ENCODE measurements at regions of chr18 and their contacts with region 1.

Region 1: DNA sequence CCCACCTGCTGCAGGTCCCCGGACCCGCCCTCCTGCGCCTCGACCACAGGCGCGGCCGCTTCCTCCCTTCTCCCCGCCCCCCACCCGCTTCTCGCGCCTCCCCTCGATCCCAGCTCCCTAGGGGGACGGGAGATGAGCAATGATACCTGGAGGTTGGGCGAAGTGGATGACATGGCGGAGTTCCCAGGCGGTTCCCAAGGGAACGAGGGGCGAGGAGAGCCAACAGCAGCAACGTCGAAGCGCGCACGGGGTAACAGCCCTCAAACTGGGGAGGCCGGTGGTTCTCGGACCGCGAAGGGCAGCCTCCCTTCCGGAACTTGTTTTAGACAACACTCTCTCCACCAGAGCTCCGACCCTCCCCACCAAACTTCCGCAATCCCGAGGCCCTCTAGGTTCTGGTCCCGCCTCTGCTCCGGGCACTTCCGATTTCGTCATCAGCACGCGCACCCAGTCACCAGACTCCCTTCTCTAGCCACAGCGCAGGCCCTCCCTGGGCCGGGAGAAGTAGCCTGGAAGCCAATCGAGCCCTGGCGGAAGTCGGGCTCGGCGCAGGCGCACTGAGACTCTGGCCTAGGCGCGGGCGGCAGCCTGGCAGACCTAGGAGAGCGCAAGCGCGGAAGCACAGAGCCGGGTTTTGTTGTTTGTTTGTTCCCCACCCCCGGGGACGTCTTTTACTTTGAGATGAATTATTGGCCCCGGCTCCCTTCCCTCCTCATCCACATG is at the start of gene VPS4B:
- DNase-seq: peak; percentile 99
- H3K4me3 ChIP-seq: peak within 1 kb of the TSS; percentile 92
- H3K27ac ChIP-seq: peak within 1 kb of the TSS; percentile 97
- H3K27me3 ChIP-seq: no peaks in the 10 kb centered on the region
- CTCF ChIP-seq: no peak
- polyA plus RNA-seq, gene VPS4B: 26.4 and 34.3 TPM in 2 replicates

Region 2: GRCh38 chr18:63367053-63367953 is 54.9 kb before region 1 on chr18 and contains the start of gene KDSR:
- CTCF ChIA-PET with region 1: no interaction called
- POLR2A ChIA-PET with region 1: interaction called, 11 read pairs
- DNase-seq: peak; percentile 97
- H3K4me3 ChIP-seq: peak within 1 kb of the TSS; percentile 90
- H3K27ac ChIP-seq: peak within 1 kb of the TSS; percentile 96
- H3K27me3 ChIP-seq: no peaks in the 10 kb centered on the region
- CTCF ChIP-seq: no peak
- polyA plus RNA-seq, gene KDSR: 34.0 and 39.9 TPM in 2 replicates

Region 3: GRCh38 chr18:63410792-63411191 is 11.5 kb before region 1 on chr18:
- CTCF ChIA-PET with region 1: no interaction called
- POLR2A ChIA-PET with region 1: interaction called, 10 read pairs
- DNase-seq: peak; percentile 36
- H3K4me3 ChIP-seq: no peak overlapping the region
- H3K27ac ChIP-seq: peak overlapping the region; percentile 33
- H3K27me3 ChIP-seq: no peaks in the 10 kb centered on the region
- CTCF ChIP-seq: no peak